ENCODE measurements at regions of chr1 and their contacts with region 1.

Region 1: DNA sequence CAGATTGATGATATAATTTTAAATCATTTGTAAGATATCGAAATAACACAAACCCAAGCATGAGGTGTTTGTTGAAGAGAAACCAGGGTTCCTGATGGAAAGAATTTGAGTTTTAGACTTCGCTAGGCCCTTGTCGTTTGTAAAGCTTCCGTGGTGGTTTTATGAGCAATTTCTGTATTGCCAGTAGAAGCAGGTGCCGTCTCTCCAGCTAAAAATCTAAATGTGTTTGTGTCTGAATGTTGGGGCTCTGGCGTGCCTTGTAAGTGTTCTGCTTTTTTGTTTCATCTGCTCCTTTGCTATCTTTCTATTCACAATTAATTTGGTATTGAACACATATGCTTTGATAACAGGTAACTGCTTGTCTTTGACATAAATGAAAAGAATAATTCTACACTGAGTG is 27.5 kb downstream of the CHRM3 start:
- DNase-seq: no peak
- H3K4me3 ChIP-seq: no peak overlapping the region
- H3K27ac ChIP-seq: no peak overlapping the region
- H3K4me1 ChIP-seq: no peaks in the 10 kb centered on the region
- H3K27me3 ChIP-seq: no peaks in the 10 kb centered on the region
- CTCF ChIP-seq: no peak

Region 2: GRCh38 chr1:239898062-239898730 is 484.3 kb after region 1 on chr1:
- intact Hi-C with region 1: loop called (anchors 10 kb)
- DNase-seq: peak; percentile 85 to 92 (median 87)
- H3K4me3 ChIP-seq: peak overlapping the region; percentile 35 to 46 (median 42)
- H3K27ac ChIP-seq: no peak overlapping the region
- H3K4me1 ChIP-seq: peaks cover 0 to 7% (median 4%) of the 10 kb centered on the region in 3 donors
- H3K27me3 ChIP-seq: no peaks in the 10 kb centered on the region
- CTCF ChIP-seq: peak; percentile 97